ENCODE measurements at regions of chr1 and their contacts with region 1.

Region 1: GRCh38 chr1:244652699-244653466 is at the start of gene DESI2:
- DNase-seq: peak; percentile 99
- ATAC-seq: peak; percentile 97 to 99
- H3K4me3 ChIP-seq: peak within 1 kb of the TSS; percentile 73 to 89 (median 87)
- H3K27ac ChIP-seq: peak within 1 kb of the TSS; percentile 92 to 98 (median 94)
- H3K4me1 ChIP-seq: peaks cover 30 to 45% of the 10 kb centered on the region in 2 donors
- H3K27me3 ChIP-seq: no peaks in the 10 kb centered on the region
- CTCF ChIP-seq: peak; percentile 54 to 69 (median 67)
- POLR2A ChIP-seq: peak; percentile 99
- total RNA-seq, gene DESI2: 22.8 to 33.0 (median 25.3) TPM

Region 2: GRCh38 chr1:244047621-244048471 is 605.0 kb before region 1 on chr1:
- in situ Hi-C with region 1: no loop called
- intact Hi-C with region 1: loop called (anchors 2 kb)
- DNase-seq: peak; percentile 99
- ATAC-seq: peak; percentile 76 to 81
- H3K4me3 ChIP-seq: peak overlapping the region; percentile 75 to 92 (median 81)
- H3K27ac ChIP-seq: peak overlapping the region; percentile 90 to 98 (median 96)
- H3K4me1 ChIP-seq: peaks cover 27 to 39% of the 10 kb centered on the region in 2 donors
- H3K27me3 ChIP-seq: no peaks in the 10 kb centered on the region
- CTCF ChIP-seq: peak in 1 of 5 experiments; percentile 13
- POLR2A ChIP-seq: peak; percentile 96 to 98

Region 3: GRCh38 chr1:244599937-244600350 is 52.9 kb before region 1 on chr1:
- in situ Hi-C with region 1: no loop called
- intact Hi-C with region 1: loop called (anchors 5 kb)
- DNase-seq: peak in 1 of 2 donors; percentile 24
- ATAC-seq: peak; percentile 91 to 95
- H3K4me3 ChIP-seq: no peak overlapping the region
- H3K27ac ChIP-seq: peak overlapping the region in 2 of 4 donors; percentile 43 to 67
- H3K4me1 ChIP-seq: no peaks in the 10 kb centered on the region
- H3K27me3 ChIP-seq: no peaks in the 10 kb centered on the region
- CTCF ChIP-seq: no peak
- POLR2A ChIP-seq: peak in 1 of 2 donors; percentile 27

Region 4: GRCh38 chr1:244730153-244730933 is 77.5 kb after region 1 on chr1:
- in situ Hi-C with region 1: no loop called
- intact Hi-C with region 1: no loop called
- DNase-seq: no peak
- ATAC-seq: peak; percentile 33 to 44
- H3K4me3 ChIP-seq: peak overlapping the region; percentile 58 to 69 (median 60)
- H3K27ac ChIP-seq: no peak overlapping the region
- H3K4me1 ChIP-seq: peaks cover 0 to 5% of the 10 kb centered on the region in 2 donors
- H3K27me3 ChIP-seq: no peaks in the 10 kb centered on the region
- CTCF ChIP-seq: no peak
- POLR2A ChIP-seq: no peak

Region 5: DNA sequence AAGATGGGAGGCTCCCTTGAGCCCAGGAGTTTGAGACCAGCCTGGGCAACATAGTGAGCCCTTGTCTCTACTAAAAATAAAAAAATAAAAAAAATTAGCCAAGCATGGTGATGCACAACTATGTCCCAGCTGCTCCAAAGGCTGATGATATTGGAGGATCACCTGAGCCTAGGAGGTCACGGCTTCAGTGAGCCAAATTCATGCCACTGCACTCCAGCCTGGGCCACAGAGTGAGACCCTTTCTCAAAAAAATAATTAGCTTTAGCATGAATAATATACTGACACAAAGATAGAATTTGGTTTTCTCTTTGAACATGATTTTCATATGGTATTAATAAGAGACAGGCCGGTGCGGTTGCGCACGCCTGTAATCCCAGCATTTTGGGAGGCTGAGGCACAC is 88.8 kb after region 1 on chr1:
- in situ Hi-C with region 1: no loop called
- intact Hi-C with region 1: no loop called
- DNase-seq: no peak
- ATAC-seq: no peak
- H3K4me3 ChIP-seq: no peak overlapping the region
- H3K27ac ChIP-seq: no peak overlapping the region
- H3K4me1 ChIP-seq: no peaks in the 10 kb centered on the region
- H3K27me3 ChIP-seq: no peaks in the 10 kb centered on the region
- CTCF ChIP-seq: no peak
- POLR2A ChIP-seq: no peak

Region 6: GRCh38 chr1:244768186-244768585 is 115.3 kb after region 1 on chr1:
- in situ Hi-C with region 1: no loop called
- intact Hi-C with region 1: no loop called
- DNase-seq: no peak
- ATAC-seq: no peak
- H3K4me3 ChIP-seq: no peak overlapping the region
- H3K27ac ChIP-seq: no peak overlapping the region
- H3K4me1 ChIP-seq: no peaks in the 10 kb centered on the region
- H3K27me3 ChIP-seq: peaks cover 0 to 5% (median 3%) of the 10 kb centered on the region in 3 donors
- CTCF ChIP-seq: no peak
- POLR2A ChIP-seq: no peak

Region 7: DNA sequence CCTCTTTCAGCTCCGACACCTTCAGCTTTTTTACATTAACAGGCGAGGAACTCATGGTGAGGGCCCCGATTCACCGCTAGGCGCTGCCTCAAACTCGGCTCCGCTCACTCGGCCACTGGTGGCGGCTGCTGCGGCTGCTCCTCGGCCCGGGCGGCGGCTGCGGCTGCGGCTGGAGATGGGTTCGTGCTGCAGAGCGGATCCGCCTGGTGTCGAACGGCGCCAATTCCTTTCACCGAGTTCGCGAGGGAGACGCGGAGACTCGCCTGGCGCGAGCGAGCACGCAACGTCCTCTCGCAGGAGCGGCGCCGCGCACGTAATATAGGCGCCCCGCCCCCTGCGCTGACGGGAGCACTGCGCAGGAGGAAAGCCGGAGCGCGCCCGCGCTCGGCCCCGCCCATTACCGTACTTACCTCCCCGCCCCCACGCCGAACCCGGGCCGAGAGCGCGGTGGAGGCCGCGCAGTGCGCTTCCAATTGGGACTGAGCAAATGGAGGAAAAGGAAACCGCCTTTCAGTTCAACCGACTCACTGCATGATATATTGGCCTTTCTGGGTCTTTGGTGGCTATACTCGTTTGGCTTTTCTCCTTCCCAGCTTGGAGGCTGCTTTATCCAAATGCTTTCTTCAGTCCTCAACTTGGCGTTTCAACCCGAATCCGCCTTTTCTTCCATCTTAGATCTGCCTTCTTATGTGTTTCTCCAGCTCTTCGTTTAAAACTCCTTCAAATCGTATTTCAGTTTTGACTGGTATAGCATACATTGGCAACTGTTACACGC is 211.6 kb after region 1 on chr1 and contains the start of gene HNRNPU:
- in situ Hi-C with region 1: no loop called
- intact Hi-C with region 1: loop called (anchors 2 kb)
- DNase-seq: peak; percentile 92 to 97
- ATAC-seq: peak; percentile 66 to 72
- H3K4me3 ChIP-seq: peak within 1 kb of the TSS; percentile 82 to 92 (median 86)
- H3K27ac ChIP-seq: peak within 1 kb of the TSS; percentile 93 to 100 (median 100)
- H3K4me1 ChIP-seq: peaks cover 42 to 44% of the 10 kb centered on the region in 2 donors
- H3K27me3 ChIP-seq: no peaks in the 10 kb centered on the region
- CTCF ChIP-seq: peak; percentile 16 to 71 (median 47)
- POLR2A ChIP-seq: peak; percentile 99
- total RNA-seq, gene HNRNPU: 167 to 243 (median 207) TPM

Region 8: GRCh38 chr1:244970661-244971551 is 318.0 kb after region 1 on chr1:
- in situ Hi-C with region 1: loop called in 2 of 4 experiments (anchors 5 to 10 kb)
- intact Hi-C with region 1: loop called (anchors 2 kb)
- DNase-seq: peak; percentile 93 to 97
- ATAC-seq: peak; percentile 78 to 83
- H3K4me3 ChIP-seq: peak overlapping the region; percentile 67 to 84 (median 79)
- H3K27ac ChIP-seq: peak overlapping the region; percentile 98 to 100 (median 98)
- H3K4me1 ChIP-seq: peaks cover 20 to 22% of the 10 kb centered on the region in 2 donors
- H3K27me3 ChIP-seq: no peaks in the 10 kb centered on the region
- CTCF ChIP-seq: peak; percentile 29 to 75 (median 63)
- POLR2A ChIP-seq: peak; percentile 73 to 80

Measured in gastrocnemius medialis (tissue), 4 donors.